Endothelial cell of umbilical vein (primary cell): ENCODE measurements at regions of chrX and their contacts with region 1.

Region 1: GRCh38 chrX:13487731-13488523 is 81.5 kb upstream of the EGFL6 start:
- DNase-seq: peak; percentile 81
- H3K4me3 ChIP-seq: no peak overlapping the region
- H3K27ac ChIP-seq: peak overlapping the region; percentile 90
- H3K4me1 ChIP-seq: peaks cover 13% of the 10 kb centered on the region
- H3K27me3 ChIP-seq: no peaks in the 10 kb centered on the region
- CTCF ChIP-seq: peak in 1 of 2 donors; percentile 15
- POLR2A ChIP-seq: peak; percentile 15

Region 2: DNA sequence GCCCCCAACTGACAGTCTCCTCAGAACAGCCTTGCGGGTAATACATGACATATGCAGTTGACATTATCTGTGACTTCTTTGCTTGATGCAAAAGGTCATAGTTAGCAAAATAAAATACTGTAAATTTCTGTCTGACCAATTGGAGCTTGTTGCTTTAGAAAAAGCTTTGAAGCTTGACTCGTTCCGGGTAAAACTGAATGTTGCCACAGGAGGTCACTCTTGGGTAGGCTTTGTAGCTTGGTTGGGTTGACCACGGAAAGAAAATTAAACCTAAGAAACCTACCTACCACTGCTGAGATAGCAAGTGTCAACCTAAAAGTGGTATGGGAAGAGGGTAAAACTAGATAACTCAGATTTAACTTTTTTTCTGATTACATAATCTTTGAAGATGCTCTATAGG is 673.5 kb before region 1 on chrX:
- CTCF ChIA-PET with region 1: interaction called, 3 read pairs
- POLR2A ChIA-PET with region 1: no interaction called
- dilution Hi-C with region 1: no loop called
- intact Hi-C with region 1: loop called (anchors 1 kb)
- DNase-seq: peak; percentile 65
- H3K4me3 ChIP-seq: no peak overlapping the region
- H3K27ac ChIP-seq: no peak overlapping the region
- H3K4me1 ChIP-seq: no peaks in the 10 kb centered on the region
- H3K27me3 ChIP-seq: no peaks in the 10 kb centered on the region
- CTCF ChIP-seq: peak; percentile 28 to 29
- POLR2A ChIP-seq: no peak

Region 3: GRCh38 chrX:13101441-13102139 is 386.3 kb before region 1 on chrX:
- CTCF ChIA-PET with region 1: interaction called, 5 read pairs
- POLR2A ChIA-PET with region 1: no interaction called
- dilution Hi-C with region 1: no loop called
- intact Hi-C with region 1: loop called (anchors 5 kb)
- DNase-seq: peak; percentile 90
- H3K4me3 ChIP-seq: no peak overlapping the region
- H3K27ac ChIP-seq: peak overlapping the region; percentile 80
- H3K4me1 ChIP-seq: peaks cover 49% of the 10 kb centered on the region
- H3K27me3 ChIP-seq: no peaks in the 10 kb centered on the region
- CTCF ChIP-seq: no peak
- POLR2A ChIP-seq: no peak

Region 4: DNA sequence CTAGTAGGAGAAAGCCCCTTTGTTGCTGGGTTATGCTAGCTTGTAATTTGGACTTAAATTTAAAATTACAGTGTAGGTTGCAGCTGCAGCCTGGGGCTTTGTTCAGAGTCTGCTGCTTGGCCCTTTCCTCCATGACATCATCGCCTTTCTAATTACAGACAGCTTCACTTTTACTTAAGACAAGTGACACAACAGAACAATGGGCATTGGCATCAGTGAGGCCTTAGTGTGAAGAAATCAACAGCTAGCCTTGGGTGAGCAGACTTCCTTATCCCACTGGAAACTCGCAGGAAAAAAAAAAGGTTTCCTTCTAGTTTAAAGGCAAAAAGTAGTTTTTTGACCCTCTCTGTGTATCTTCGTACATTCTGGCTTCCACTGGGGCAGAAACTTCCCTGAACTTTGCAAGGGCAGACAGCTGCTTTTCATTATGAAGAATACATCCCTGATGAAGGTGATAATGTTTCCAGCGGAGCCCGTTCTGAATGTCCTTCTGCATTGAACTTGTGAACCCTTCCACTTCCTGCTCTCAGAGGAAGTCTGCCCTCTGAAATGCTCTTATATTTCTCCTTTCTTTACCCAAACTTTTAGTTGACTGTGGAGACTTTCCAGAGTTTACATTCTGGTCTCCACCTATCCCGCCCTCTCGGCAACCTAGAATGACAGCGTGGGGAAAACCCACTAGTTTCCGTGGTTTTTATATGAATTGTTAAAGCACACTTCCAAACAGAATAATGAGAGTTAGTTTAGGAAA is 320.3 kb before region 1 on chrX:
- CTCF ChIA-PET with region 1: no interaction called
- POLR2A ChIA-PET with region 1: no interaction called
- dilution Hi-C with region 1: no loop called
- intact Hi-C with region 1: loop called (anchors 5 kb)
- DNase-seq: peak; percentile 79
- H3K4me3 ChIP-seq: no peak overlapping the region
- H3K27ac ChIP-seq: peak overlapping the region; percentile 93
- H3K4me1 ChIP-seq: peaks cover 38% of the 10 kb centered on the region
- H3K27me3 ChIP-seq: no peaks in the 10 kb centered on the region
- CTCF ChIP-seq: no peak
- POLR2A ChIP-seq: no peak

Region 5: DNA sequence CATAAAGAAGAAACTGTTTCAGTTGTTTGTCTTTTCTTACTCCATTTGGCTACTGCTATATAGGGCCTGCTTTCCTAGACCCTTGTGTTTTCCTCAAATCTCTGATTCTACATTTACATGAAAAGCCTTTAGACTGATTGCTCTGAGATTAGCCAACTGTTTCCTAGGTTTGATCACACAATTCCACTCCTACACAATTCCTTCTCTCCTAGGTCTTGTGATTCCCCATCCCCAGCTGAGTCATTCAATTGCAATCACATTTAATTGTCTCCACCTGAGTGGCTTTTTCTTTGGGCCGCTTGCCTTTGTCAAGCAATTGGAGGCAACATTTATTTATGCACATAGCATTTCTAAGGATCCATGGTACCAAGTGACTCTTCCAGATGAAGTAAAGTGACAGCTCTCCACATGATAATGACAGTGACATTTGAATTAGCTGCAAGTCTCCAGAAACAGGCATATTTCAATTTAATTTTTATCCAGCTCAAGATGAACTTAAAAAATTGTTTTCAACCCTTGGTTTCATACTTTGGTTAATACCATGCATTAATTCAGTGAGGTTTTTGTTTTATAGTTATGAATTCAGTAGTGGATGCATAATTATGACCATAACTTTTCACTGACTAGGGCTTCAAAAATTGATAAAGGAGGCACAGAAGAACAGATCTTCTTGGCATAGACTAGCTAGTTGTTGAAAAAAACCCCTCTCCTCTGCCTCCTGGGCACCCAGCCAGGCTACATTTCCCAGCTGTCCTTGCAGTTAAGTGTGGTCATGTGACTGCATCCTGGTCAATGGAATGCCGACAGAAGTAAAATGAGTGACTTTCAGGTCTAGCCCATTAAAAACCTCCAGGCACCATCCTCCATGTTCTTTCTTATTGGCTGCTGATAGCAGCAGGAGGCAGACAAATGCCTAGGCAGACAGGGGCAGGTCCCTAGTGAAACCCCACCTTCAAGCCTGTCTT is 203.7 kb before region 1 on chrX:
- CTCF ChIA-PET with region 1: interaction called, 10 read pairs
- POLR2A ChIA-PET with region 1: interaction called, 6 read pairs
- dilution Hi-C with region 1: no loop called
- intact Hi-C with region 1: loop called (anchors 1 kb)
- DNase-seq: peak; percentile 71
- H3K4me3 ChIP-seq: no peak overlapping the region
- H3K27ac ChIP-seq: peak overlapping the region; percentile 62
- H3K4me1 ChIP-seq: peaks cover 49% of the 10 kb centered on the region
- H3K27me3 ChIP-seq: no peaks in the 10 kb centered on the region
- CTCF ChIP-seq: no peak
- POLR2A ChIP-seq: no peak

Region 6: DNA sequence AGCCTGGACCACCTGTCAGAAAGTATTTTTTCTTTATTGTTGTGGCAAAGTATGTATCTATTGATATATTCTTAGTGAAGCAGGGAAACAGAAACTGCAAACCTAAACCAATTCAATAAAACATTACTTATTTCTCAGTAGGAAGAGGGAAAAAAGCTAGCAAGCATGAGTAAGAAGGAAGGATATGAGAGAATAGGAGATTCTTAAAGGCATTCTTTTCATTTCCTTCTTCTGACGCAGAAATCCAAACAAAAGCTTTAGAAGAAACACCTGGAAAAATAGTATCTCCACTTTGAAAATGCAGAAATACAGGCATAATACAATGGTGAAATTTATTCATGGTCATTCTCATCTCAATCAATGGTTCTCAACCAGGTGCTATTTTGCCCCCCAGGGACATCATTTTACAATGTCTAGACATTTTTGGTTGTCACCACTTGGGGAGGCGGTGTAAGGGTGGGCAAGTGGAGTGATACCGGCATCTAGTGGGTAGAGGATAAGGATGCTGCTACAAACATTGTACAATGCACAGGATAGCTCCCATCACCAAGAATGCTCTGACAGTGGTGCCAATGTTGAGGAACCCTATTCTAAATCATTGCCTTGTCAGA is 146.3 kb before region 1 on chrX:
- CTCF ChIA-PET with region 1: interaction called, 17 read pairs
- POLR2A ChIA-PET with region 1: no interaction called
- dilution Hi-C with region 1: no loop called
- intact Hi-C with region 1: loop called (anchors 1 kb)
- DNase-seq: peak; percentile 59
- H3K4me3 ChIP-seq: no peak overlapping the region
- H3K27ac ChIP-seq: peak overlapping the region; percentile 90
- H3K4me1 ChIP-seq: peaks cover 20% of the 10 kb centered on the region
- H3K27me3 ChIP-seq: no peaks in the 10 kb centered on the region
- CTCF ChIP-seq: no peak
- POLR2A ChIP-seq: no peak

Region 7: GRCh38 chrX:13387666-13388494 is 100.0 kb before region 1 on chrX:
- CTCF ChIA-PET with region 1: no interaction called
- POLR2A ChIA-PET with region 1: no interaction called
- dilution Hi-C with region 1: no loop called
- intact Hi-C with region 1: no loop called
- DNase-seq: no peak
- H3K4me3 ChIP-seq: no peak overlapping the region
- H3K27ac ChIP-seq: no peak overlapping the region
- H3K4me1 ChIP-seq: no peaks in the 10 kb centered on the region
- H3K27me3 ChIP-seq: no peaks in the 10 kb centered on the region
- CTCF ChIP-seq: no peak
- POLR2A ChIP-seq: no peak

Region 8: GRCh38 chrX:13398073-13398823 is 89.7 kb before region 1 on chrX:
- CTCF ChIA-PET with region 1: no interaction called
- POLR2A ChIA-PET with region 1: no interaction called
- dilution Hi-C with region 1: no loop called
- intact Hi-C with region 1: loop called (anchors 1 kb)
- DNase-seq: peak; percentile 95
- H3K4me3 ChIP-seq: no peak overlapping the region
- H3K27ac ChIP-seq: peak overlapping the region; percentile 93
- H3K4me1 ChIP-seq: peaks cover 31% of the 10 kb centered on the region
- H3K27me3 ChIP-seq: no peaks in the 10 kb centered on the region
- CTCF ChIP-seq: no peak
- POLR2A ChIP-seq: peak; percentile 37

Region 9: GRCh38 chrX:13473442-13474163 is 14.3 kb before region 1 on chrX:
- CTCF ChIA-PET with region 1: no interaction called
- POLR2A ChIA-PET with region 1: no interaction called
- dilution Hi-C with region 1: no loop called
- intact Hi-C with region 1: no loop called
- DNase-seq: peak; percentile 11
- H3K4me3 ChIP-seq: no peak overlapping the region
- H3K27ac ChIP-seq: no peak overlapping the region
- H3K4me1 ChIP-seq: peaks cover 9% of the 10 kb centered on the region
- H3K27me3 ChIP-seq: no peaks in the 10 kb centered on the region
- CTCF ChIP-seq: no peak
- POLR2A ChIP-seq: no peak